PC-3 (cell line): ENCODE measurements at regions of chr6 and their contacts with region 1.

Region 1: DNA sequence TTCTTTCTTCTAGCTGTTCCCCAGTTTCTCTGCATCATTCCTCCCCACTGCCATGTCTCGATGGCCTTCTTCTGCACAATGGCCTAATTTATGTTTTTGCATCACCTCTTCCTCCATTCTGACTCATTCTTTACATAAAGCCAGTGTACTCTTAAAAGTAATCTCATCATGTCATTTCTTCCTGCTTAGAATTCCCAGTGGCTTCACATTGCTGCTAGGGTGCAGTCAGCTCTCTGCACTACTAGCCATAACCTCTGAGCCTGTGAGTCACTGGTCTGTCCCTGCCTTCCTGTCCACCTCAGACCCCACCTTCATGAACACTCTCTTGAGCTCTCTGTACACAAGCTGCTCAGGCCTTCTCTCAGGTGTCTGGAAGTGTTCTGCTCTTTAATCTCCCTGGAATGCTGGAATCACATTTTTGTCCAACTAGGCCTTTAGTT is 24.1 kb upstream of the TRIM27 start:
- DNase-seq: peak; percentile 94
- ATAC-seq: peak; percentile 90
- H3K4me3 ChIP-seq: no peak overlapping the region
- H3K27ac ChIP-seq: peak overlapping the region; percentile 93
- H3K4me1 ChIP-seq: peaks cover 27% of the 10 kb centered on the region
- H3K27me3 ChIP-seq: no peaks in the 10 kb centered on the region
- CTCF ChIP-seq: no peak

Region 2: GRCh38 chr6:28657769-28658465 is 289.9 kb before region 1 on chr6:
- CTCF ChIA-PET with region 1: no interaction called
- POLR2A ChIA-PET with region 1: no interaction called
- intact Hi-C with region 1: no loop called
- DNase-seq: peak; percentile 75
- ATAC-seq: peak; percentile 85
- H3K4me3 ChIP-seq: peak overlapping the region; percentile 69
- H3K27ac ChIP-seq: no peak overlapping the region
- H3K4me1 ChIP-seq: peaks cover 7% of the 10 kb centered on the region
- H3K27me3 ChIP-seq: no peaks in the 10 kb centered on the region
- CTCF ChIP-seq: no peak

Region 3: GRCh38 chr6:28863604-28864320 is 84.1 kb before region 1 on chr6:
- CTCF ChIA-PET with region 1: interaction called, 4 read pairs
- POLR2A ChIA-PET with region 1: interaction called, 17 read pairs
- intact Hi-C with region 1: no loop called
- DNase-seq: peak; percentile 91
- ATAC-seq: peak; percentile 61
- H3K4me3 ChIP-seq: peak overlapping the region; percentile 87
- H3K27ac ChIP-seq: peak overlapping the region; percentile 22; the same call in 1 of the 2 replicates
- H3K4me1 ChIP-seq: peaks cover 29% of the 10 kb centered on the region
- H3K27me3 ChIP-seq: no peaks in the 10 kb centered on the region
- CTCF ChIP-seq: no peak